Mucosa of descending colon (tissue), 3 donors: ENCODE measurements at regions of chr4 and their contacts with region 1.

Region 1: GRCh38 chr4:33924811-33925210 is 2319.5 kb downstream of the ARAP2 start:
- DNase-seq: no peak
- ATAC-seq: no peak
- H3K4me3 ChIP-seq: no peak overlapping the region
- H3K4me1 ChIP-seq: no peaks in the 10 kb centered on the region
- CTCF ChIP-seq: no peak

Region 2: GRCh38 chr4:33873791-33874190 is 51.0 kb before region 1 on chr4:
- intact Hi-C with region 1: loop called in 1 of 2 experiments (anchors 5 kb)
- DNase-seq: no peak
- ATAC-seq: no peak
- H3K4me3 ChIP-seq: no peak overlapping the region
- H3K4me1 ChIP-seq: no peaks in the 10 kb centered on the region
- CTCF ChIP-seq: no peak